PC-9 (cell line): ENCODE measurements at regions of chr3 and their contacts with region 1.

Region 1: DNA sequence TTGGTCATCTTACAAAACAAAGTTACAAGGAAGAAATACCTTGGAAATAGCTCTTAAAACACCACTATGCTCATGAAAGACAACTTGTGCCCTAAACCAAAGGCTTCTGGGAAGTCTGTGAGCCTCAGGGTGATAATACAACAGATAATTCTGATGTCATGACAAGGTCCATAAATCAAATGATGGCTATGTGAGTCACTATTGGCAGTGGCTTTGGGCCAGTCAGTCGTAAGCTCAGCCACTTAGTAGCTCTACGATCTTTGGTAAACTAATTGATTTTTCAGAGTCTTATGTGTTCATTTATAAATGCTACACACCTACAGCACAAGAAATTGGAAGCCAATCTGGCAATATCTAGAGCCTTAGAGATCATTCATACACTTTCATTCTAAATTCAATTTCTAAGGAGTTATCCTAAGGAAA is 12.9 kb downstream of the TNIK start:
- DNase-seq: peak; percentile 28 to 91
- H3K4me3 ChIP-seq: peak overlapping the region; percentile 5; the same call in 1 of the 2 replicates
- H3K27ac ChIP-seq: peak overlapping the region; percentile 25
- H3K4me1 ChIP-seq: peaks cover 27% of the 10 kb centered on the region
- H3K27me3 ChIP-seq: no peaks in the 10 kb centered on the region
- CTCF ChIP-seq: no peak

Region 2: GRCh38 chr3:171306631-171307030 is 140.7 kb before region 1 on chr3:
- CTCF ChIA-PET with region 1: no interaction called
- POLR2A ChIA-PET with region 1: interaction called, 21 read pairs
- intact Hi-C with region 1: no loop called
- DNase-seq: no peak
- H3K4me3 ChIP-seq: no peak overlapping the region
- H3K27ac ChIP-seq: no peak overlapping the region
- H3K4me1 ChIP-seq: 0 out of 2 replicates have a peak, but pooled peaks cover 5% of the 10 kb centered on the region
- H3K27me3 ChIP-seq: no peaks in the 10 kb centered on the region
- CTCF ChIP-seq: no peak

Region 3: DNA sequence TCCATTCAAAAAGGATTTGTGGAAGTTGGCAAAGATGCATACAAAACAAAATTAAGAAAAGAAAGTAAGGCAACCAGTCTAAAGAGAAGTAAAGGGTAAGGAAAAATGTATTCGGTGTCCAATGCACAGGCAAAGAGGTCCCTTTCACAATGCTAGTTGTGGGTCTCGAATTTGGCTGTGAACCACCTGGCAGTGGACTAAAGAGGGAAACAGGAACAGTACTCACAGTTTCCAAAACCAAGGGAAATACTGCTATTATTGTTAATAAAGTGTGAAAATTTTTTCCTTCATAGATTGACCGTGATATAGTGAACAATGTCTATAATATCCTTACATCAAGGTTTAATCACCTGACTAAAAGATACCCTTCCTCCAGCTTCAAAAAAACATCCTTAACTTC is 45.1 kb before region 1 on chr3:
- CTCF ChIA-PET with region 1: no interaction called
- POLR2A ChIA-PET with region 1: interaction called, 11 read pairs
- intact Hi-C with region 1: no loop called
- DNase-seq: no peak
- H3K4me3 ChIP-seq: no peak overlapping the region
- H3K27ac ChIP-seq: no peak overlapping the region
- H3K4me1 ChIP-seq: no peaks in the 10 kb centered on the region
- H3K27me3 ChIP-seq: no peaks in the 10 kb centered on the region
- CTCF ChIP-seq: no peak

Region 4: GRCh38 chr3:171417813-171418212 is 29.5 kb before region 1 on chr3:
- CTCF ChIA-PET with region 1: no interaction called
- POLR2A ChIA-PET with region 1: no interaction called
- intact Hi-C with region 1: no loop called
- DNase-seq: no peak
- H3K4me3 ChIP-seq: no peak overlapping the region
- H3K27ac ChIP-seq: no peak overlapping the region
- H3K4me1 ChIP-seq: no peaks in the 10 kb centered on the region
- H3K27me3 ChIP-seq: no peaks in the 10 kb centered on the region
- CTCF ChIP-seq: no peak